ENCODE measurements at regions of chr2 and their contacts with region 1.

Region 1: GRCh38 chr2:74458132-74458925 is at the start of gene WBP1:
- DNase-seq: peak; percentile 100
- H3K4me3 Mint-ChIP-seq: peak within 1 kb of the TSS; percentile 99
- H3K27ac Mint-ChIP-seq: peak within 1 kb of the TSS; percentile 99
- H3K4me1 Mint-ChIP-seq: peaks cover 33% of the 10 kb centered on the region
- H3K27me3 Mint-ChIP-seq: no peaks in the 10 kb centered on the region
- total RNA-seq, gene WBP1: 38.6 and 40.7 TPM in 2 replicates

Region 2: GRCh38 chr2:73233154-73233931 is 1225.0 kb before region 1 on chr2 and contains the start of gene PRADC1:
- intact Hi-C with region 1: loop called (anchors 10 kb)
- DNase-seq: peak; percentile 96
- H3K4me3 Mint-ChIP-seq: peak within 1 kb of the TSS; percentile 96
- H3K27ac Mint-ChIP-seq: peak within 1 kb of the TSS; percentile 92
- H3K4me1 Mint-ChIP-seq: peaks cover 31% of the 10 kb centered on the region
- H3K27me3 Mint-ChIP-seq: no peaks in the 10 kb centered on the region
- total RNA-seq, gene PRADC1: 10.5 and 11.4 TPM in 2 replicates

Region 3: DNA sequence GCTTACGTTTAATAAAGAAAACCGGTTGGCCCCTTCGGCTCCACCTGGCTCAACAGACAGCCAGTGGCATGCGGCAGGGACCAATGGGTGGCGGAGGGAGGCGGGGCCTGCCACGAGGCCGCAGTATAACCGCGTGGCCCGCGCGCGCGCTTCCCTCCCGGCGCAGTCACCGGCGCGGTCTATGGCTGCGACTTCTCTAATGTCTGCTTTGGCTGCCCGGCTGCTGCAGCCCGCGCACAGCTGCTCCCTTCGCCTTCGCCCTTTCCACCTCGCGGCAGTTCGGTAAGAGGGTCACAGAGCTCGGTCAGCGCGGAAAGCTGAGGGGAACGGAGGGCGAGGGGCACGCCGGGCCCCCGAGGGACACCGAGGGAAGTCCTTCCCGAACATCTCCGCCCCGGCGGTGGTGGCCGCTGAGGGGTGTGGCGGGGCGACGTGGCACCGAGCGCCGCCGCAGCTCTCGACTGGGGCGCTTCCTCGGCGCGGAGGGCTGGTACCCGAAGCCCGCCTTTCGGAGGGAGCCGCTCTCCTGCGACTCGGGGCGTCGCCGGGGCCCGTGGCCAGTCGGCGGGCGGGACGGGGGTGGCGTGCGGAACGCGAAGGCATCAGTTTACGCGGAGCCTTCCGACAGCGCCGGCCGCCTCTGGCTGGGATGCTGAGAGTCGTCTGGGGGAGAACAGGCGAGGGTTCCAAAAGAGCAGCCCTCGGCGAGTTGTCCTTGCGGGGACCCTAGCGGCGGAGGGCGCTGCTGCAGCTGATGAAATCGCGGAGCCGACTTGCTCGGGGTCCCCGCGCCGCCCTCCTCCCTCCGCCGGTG is 259.7 kb before region 1 on chr2 and contains the start of gene MTHFD2:
- intact Hi-C with region 1: loop called (anchors 5 kb)
- DNase-seq: peak; percentile 93
- H3K4me3 Mint-ChIP-seq: peak within 1 kb of the TSS; percentile 100
- H3K27ac Mint-ChIP-seq: peak within 1 kb of the TSS; percentile 100
- H3K4me1 Mint-ChIP-seq: peaks cover 38% of the 10 kb centered on the region
- H3K27me3 Mint-ChIP-seq: no peaks in the 10 kb centered on the region
- total RNA-seq, gene MTHFD2: 371 and 381 TPM in 2 replicates

Region 4: DNA sequence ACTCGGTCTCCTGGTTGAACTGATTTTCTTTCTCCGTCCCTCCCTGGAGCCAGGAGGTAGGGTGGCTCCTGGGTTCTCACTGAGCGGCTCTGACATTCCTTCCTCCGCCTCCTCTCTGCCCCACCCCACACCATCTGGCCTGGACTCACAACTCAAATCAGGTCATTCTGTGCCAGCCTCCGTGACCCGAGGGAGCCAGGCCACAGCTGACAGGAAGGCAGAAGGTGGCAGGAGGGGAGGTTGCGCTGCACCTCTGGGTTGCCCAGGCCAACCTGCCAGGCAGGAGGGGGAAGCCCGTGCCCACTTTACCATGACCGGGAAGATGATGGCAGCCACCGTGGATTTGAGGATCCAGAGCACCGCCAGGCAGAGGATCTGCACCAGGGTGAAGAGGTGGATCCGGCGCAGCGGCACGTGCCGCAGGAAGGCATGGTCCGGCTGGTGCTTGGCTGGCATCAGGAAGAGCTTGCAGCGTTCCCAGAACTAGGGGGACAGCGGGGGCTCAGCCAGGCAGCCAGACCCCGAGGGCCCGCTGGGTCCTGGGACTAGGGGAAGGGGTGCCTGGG is 231.6 kb before region 1 on chr2:
- intact Hi-C with region 1: no loop called
- DNase-seq: no peak
- H3K4me3 Mint-ChIP-seq: no peak overlapping the region
- H3K27ac Mint-ChIP-seq: no peak overlapping the region
- H3K4me1 Mint-ChIP-seq: peaks cover 3% of the 10 kb centered on the region
- H3K27me3 Mint-ChIP-seq: no peaks in the 10 kb centered on the region

Region 5: GRCh38 chr2:74391580-74392448 is 66.5 kb before region 1 on chr2:
- intact Hi-C with region 1: no loop called
- DNase-seq: peak; percentile 90
- H3K4me3 Mint-ChIP-seq: peak overlapping the region; percentile 92
- H3K27ac Mint-ChIP-seq: peak overlapping the region; percentile 98
- H3K4me1 Mint-ChIP-seq: peaks cover 9% of the 10 kb centered on the region
- H3K27me3 Mint-ChIP-seq: peaks cover 6% of the 10 kb centered on the region

Region 6: GRCh38 chr2:74472086-74472944 is 14.0 kb after region 1 on chr2 and contains the start of gene MRPL53:
- intact Hi-C with region 1: loop called (anchors 1 kb)
- DNase-seq: peak; percentile 95
- H3K4me3 Mint-ChIP-seq: peak within 1 kb of the TSS; percentile 97
- H3K27ac Mint-ChIP-seq: peak within 1 kb of the TSS; percentile 98
- H3K4me1 Mint-ChIP-seq: peaks cover 25% of the 10 kb centered on the region
- H3K27me3 Mint-ChIP-seq: no peaks in the 10 kb centered on the region
- total RNA-seq, gene MRPL53: 102 and 110 TPM in 2 replicates

Region 7: DNA sequence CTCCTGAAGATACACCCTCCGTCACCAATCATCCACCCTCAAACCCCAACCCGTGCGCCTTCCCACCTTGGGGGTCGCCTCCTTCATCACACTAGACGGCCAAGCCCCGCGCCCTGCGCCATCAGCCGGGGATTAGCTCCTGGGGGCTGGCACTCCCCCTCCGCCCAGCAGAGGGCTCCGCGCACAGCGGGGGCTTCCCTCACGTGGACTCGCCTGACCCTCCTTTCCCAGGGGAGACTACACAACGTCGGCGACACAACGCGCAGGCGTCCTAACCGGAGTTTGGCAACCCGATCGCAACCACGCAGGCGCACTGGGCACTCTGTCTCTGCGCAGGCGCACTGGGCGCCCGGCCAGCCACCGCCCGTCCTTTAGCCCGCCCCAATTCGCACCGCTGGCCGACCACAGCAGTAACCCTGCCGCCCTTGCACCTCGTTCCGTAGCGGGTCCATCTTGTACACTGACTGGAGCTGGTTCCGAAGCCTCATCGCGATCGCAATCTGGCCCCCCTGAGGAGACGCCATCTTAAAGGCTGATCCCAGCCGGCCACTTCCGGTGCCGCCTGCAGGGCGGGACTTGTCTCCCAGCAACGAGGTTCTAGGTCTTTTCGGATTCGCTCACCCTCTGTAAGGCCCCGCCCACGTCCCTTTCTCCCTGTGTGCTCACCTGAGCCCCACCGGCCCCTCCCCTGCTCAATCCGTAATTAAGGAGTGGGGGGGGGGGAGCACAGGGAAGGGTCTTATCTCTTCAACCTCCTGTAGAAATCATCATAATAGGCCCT is 49.0 kb after region 1 on chr2 and contains the start of gene PCGF1:
- intact Hi-C with region 1: loop called (anchors 1 kb)
- DNase-seq: peak; percentile 96
- H3K4me3 Mint-ChIP-seq: peak within 1 kb of the TSS; percentile 97
- H3K27ac Mint-ChIP-seq: peak within 1 kb of the TSS; percentile 100
- H3K4me1 Mint-ChIP-seq: peaks cover 52% of the 10 kb centered on the region
- H3K27me3 Mint-ChIP-seq: peaks cover 24% of the 10 kb centered on the region
- total RNA-seq, gene PCGF1: 36.5 and 39.7 TPM in 2 replicates

Region 8: GRCh38 chr2:74833418-74834233 is 375.3 kb after region 1 on chr2 and contains the start of gene HK2:
- intact Hi-C with region 1: loop called (anchors 10 kb)
- DNase-seq: peak; percentile 81
- H3K4me3 Mint-ChIP-seq: peak within 1 kb of the TSS; percentile 95
- H3K27ac Mint-ChIP-seq: peak within 1 kb of the TSS; percentile 93
- H3K4me1 Mint-ChIP-seq: peaks cover 45% of the 10 kb centered on the region
- H3K27me3 Mint-ChIP-seq: no peaks in the 10 kb centered on the region
- total RNA-seq, gene HK2: 102 TPM in 2 replicates

Measured in activated T-helper 2 cell treated with anti-CD3 and anti-CD28 coated beads, Interferon-gamma antibody, Interleukin-2, Interleukin-4, amounts not matched to agents 10 μg/mL and 5 μg/mL and 100 μg/mL, durations not matched to agents 14 hours and 24 hours and 36 hours (primary cell).